Heart left ventricle (tissue), 16 donors: ENCODE measurements at regions of chr4 and their contacts with region 1.

Region 1: GRCh38 chr4:108320061-108320460 is 151.3 kb upstream of the LEF1 start:
- DNase-seq: no peak
- ATAC-seq: no peak
- H3K4me3 ChIP-seq: no peak overlapping the region
- H3K27ac ChIP-seq: no peak overlapping the region
- H3K4me1 ChIP-seq: no peaks in the 10 kb centered on the region
- H3K27me3 ChIP-seq: no peaks in the 10 kb centered on the region
- CTCF ChIP-seq: no peak
- POLR2A ChIP-seq: no peak

Region 2: DNA sequence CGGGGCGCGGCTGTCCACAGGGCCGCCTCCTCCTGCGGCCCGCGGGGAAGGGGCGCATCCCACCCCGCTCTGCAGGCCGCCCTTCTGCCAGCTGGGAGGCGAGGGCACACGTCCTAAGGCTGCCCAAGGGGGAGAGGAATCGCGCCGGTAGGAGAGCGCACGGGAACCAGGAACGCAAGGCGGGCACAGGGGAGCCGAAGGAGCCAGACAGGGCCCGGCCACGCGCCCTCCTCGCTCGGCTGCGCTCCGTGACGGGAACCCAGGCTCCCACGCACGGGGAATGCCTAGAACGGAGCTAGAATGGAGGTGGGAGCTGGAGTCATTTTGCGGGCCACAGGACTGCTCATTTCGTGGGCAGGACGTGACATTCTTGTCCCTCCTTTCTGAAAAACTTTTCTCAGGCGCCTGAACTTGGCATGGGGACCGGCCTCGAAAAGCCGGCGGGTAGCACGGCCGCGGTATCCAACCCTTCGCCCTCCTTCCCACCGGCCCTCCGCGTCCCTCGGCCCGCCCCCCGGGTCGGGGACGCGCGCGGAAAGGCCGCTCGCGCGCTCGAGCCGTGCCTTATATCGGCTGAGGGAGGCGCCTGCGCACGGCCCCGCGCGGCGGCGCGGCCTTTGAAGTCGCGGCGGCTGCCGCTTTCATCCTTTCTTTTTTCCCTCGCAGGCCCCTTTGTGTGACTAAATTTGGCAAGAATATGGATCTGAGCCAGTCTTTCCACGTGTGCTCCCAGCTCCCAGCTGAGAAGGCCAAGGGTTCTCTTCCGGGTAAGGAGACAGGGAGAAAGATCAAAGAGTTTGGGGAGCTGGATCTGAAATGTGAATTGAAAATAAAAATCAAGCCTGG is 147.1 kb before region 1 on chr4:
- intact Hi-C with region 1: loop called in 1 of 10 experiments (anchors 10 kb)
- DNase-seq: peak; percentile 32 to 67 (median 42)
- ATAC-seq: peak in 3 of 4 donors; percentile 76 to 86 (median 84)
- H3K4me3 ChIP-seq: peak overlapping the region; percentile 32 to 70 (median 58)
- H3K27ac ChIP-seq: peak overlapping the region in 6 of 12 donors; percentile 17 to 70 (median 54)
- H3K4me1 ChIP-seq: peaks cover 0 to 33% (median 15%) of the 10 kb centered on the region in 12 donors
- H3K27me3 ChIP-seq: peaks cover 12 to 73% (median 59%) of the 10 kb centered on the region in 9 donors
- CTCF ChIP-seq: no peak
- POLR2A ChIP-seq: no peak